Naive thymus-derived CD4-positive, alpha-beta T cell (primary cell): ENCODE measurements at regions of chr7 and their contacts with region 1.

Region 1: DNA sequence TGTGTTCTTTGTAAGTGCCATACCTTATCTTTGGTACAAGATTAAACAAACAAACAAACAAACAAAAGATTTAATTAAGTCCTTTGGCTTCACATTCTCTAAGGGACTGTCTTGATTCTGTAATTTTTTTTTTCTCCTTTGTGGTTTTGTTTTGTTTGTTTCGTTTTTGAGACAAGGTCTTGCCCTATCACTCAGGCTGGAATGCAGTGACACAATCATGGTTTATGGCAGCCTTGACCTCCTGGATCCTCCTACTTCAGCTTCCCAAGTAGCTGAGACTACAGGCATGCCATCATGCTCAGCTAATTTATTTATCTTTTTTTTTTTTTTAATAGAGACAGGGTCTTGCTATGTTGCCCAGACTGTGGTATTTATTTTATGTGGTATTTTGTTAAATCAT is 165.8 kb downstream of the LRRC4 start:
- DNase-seq: no peak
- ATAC-seq: no peak
- H3K4me3 ChIP-seq: no peak overlapping the region
- H3K4me3 Mint-ChIP-seq: no peak overlapping the region
- H3K27ac ChIP-seq: no peak overlapping the region
- H3K27ac Mint-ChIP-seq: no peak overlapping the region
- H3K4me1 ChIP-seq: peaks cover 0 to 7% of the 10 kb centered on the region in 2 donors
- H3K4me1 Mint-ChIP-seq: peaks cover 19 to 43% (median 23%) of the 10 kb centered on the region in 7 donors
- H3K27me3 ChIP-seq: no peaks in the 10 kb centered on the region
- H3K27me3 Mint-ChIP-seq: peaks cover 0 to 1% (median 0%) of the 10 kb centered on the region in 5 donors

Region 2: GRCh38 chr7:127776776-127777386 is 88.6 kb before region 1 on chr7:
- CTCF ChIA-PET with region 1: no interaction called
- POLR2A ChIA-PET with region 1: no interaction called
- intact Hi-C with region 1: no loop called
- DNase-seq: no peak
- ATAC-seq: no peak
- H3K4me3 ChIP-seq: no peak overlapping the region
- H3K4me3 Mint-ChIP-seq: no peak overlapping the region
- H3K27ac ChIP-seq: no peak overlapping the region
- H3K27ac Mint-ChIP-seq: no peak overlapping the region
- H3K4me1 ChIP-seq: no peaks in the 10 kb centered on the region
- H3K4me1 Mint-ChIP-seq: peaks cover 9 to 39% (median 20%) of the 10 kb centered on the region in 7 donors
- H3K27me3 ChIP-seq: no peaks in the 10 kb centered on the region
- H3K27me3 Mint-ChIP-seq: no peaks in the 10 kb centered on the region

Region 3: DNA sequence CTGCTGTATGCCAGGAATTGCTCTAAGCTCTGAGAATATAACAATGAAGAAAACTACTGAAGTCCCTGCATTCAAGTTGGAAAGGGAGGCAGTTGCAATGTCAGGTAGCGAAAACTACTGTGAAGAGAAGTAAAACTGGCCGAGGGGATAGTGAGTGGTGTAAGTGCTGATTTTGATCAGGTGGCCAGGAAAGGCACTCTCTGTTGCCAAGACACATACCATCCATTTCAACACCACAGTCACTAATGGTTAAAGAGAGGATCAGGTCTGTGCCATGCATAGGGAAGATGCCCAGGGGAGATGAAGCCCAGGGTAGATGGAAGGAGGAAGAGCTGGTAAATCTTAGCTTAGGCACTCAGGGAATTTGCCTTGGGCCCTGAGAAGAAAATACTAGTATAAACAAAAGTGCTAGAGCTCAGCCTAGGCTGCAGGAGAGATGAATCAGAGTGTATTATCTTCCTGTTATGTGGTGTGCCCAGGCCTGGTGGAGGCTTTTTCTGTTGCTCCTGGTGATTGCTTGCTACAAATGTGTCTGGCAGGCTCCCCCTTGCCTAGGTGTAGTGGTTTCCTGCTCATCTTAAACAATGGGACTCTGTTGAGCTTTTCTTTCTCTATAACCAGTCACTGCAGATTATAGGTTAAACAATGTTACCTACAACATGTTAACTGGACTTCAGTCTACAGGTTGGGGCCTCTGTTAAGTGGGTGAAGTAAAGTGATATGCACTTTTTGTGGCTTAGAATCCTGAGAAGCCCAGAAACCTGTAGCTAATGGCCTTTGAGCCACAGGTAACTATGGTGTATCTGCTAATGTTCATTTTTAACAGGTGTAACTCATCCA is 40.2 kb after region 1 on chr7:
- CTCF ChIA-PET with region 1: no interaction called
- POLR2A ChIA-PET with region 1: no interaction called
- intact Hi-C with region 1: loop called in 1 of 2 experiments (anchors 5 kb)
- DNase-seq: no peak
- ATAC-seq: no peak
- H3K4me3 ChIP-seq: no peak overlapping the region
- H3K4me3 Mint-ChIP-seq: peak overlapping the region in 1 of 10 donors; percentile 3
- H3K27ac ChIP-seq: no peak overlapping the region
- H3K27ac Mint-ChIP-seq: peak overlapping the region in 1 of 9 donors; percentile 25
- H3K4me1 ChIP-seq: no peaks in the 10 kb centered on the region
- H3K4me1 Mint-ChIP-seq: peaks cover 12 to 51% (median 20%) of the 10 kb centered on the region in 7 donors
- H3K27me3 ChIP-seq: no peaks in the 10 kb centered on the region
- H3K27me3 Mint-ChIP-seq: no peaks in the 10 kb centered on the region

Region 4: GRCh38 chr7:127920787-127921438 is 55.4 kb after region 1 on chr7:
- CTCF ChIA-PET with region 1: no interaction called
- POLR2A ChIA-PET with region 1: no interaction called
- intact Hi-C with region 1: no loop called
- DNase-seq: no peak
- ATAC-seq: no peak
- H3K4me3 ChIP-seq: no peak overlapping the region
- H3K4me3 Mint-ChIP-seq: no peak overlapping the region
- H3K27ac ChIP-seq: no peak overlapping the region
- H3K27ac Mint-ChIP-seq: no peak overlapping the region
- H3K4me1 ChIP-seq: no peaks in the 10 kb centered on the region
- H3K4me1 Mint-ChIP-seq: peaks cover 0 to 20% (median 11%) of the 10 kb centered on the region in 7 donors
- H3K27me3 ChIP-seq: no peaks in the 10 kb centered on the region
- H3K27me3 Mint-ChIP-seq: no peaks in the 10 kb centered on the region

Region 5: DNA sequence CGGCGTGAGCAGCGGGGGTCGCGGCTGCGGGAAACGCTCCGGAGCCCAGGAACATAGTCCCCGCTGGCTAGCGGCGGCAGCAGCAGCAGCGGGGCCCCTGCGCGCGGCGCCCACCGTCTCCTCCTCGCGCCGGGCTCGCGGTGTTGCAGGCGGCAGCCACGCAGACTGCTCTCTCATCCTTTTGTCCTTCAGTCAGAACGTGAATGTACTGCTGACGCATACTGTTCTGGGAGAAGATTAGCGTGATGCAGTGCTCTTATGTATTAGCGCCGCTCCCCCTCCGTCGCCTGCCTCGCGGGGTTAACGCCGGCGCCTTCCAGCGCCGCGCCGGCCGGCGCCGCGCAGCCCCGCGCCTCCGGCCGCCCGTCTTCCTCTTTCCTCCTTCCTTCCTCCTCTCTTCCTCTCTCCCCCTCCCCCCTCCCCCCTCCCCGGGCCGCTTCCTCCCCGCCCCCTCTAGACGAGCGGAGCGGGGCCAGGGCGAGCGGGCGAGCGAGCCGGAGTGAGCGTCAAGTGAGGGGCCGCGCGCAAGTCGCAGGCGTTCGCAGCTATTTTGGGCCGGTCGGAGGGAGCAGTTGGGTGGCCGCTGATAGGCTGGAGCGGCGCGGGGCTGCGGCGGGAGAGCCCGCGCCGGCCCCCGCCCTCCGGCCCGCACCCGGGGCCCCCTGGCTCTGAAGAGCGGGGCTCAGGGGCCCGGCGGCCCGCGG is 166.6 kb after region 1 on chr7:
- CTCF ChIA-PET with region 1: no interaction called
- POLR2A ChIA-PET with region 1: no interaction called
- intact Hi-C with region 1: no loop called
- DNase-seq: peak; percentile 29 to 63 (median 53)
- ATAC-seq: peak; percentile 92
- H3K4me3 ChIP-seq: peak overlapping the region; percentile 61
- H3K4me3 Mint-ChIP-seq: peak overlapping the region; percentile 84 to 97 (median 92)
- H3K27ac ChIP-seq: no peak overlapping the region
- H3K27ac Mint-ChIP-seq: peak overlapping the region in 3 of 9 donors; percentile 74 to 76 (median 74)
- H3K4me1 ChIP-seq: no peaks in the 10 kb centered on the region
- H3K4me1 Mint-ChIP-seq: peaks cover 6 to 36% (median 23%) of the 10 kb centered on the region in 7 donors
- H3K27me3 ChIP-seq: no peaks in the 10 kb centered on the region
- H3K27me3 Mint-ChIP-seq: peaks cover 0 to 34% (median 7%) of the 10 kb centered on the region in 5 donors

Region 6: DNA sequence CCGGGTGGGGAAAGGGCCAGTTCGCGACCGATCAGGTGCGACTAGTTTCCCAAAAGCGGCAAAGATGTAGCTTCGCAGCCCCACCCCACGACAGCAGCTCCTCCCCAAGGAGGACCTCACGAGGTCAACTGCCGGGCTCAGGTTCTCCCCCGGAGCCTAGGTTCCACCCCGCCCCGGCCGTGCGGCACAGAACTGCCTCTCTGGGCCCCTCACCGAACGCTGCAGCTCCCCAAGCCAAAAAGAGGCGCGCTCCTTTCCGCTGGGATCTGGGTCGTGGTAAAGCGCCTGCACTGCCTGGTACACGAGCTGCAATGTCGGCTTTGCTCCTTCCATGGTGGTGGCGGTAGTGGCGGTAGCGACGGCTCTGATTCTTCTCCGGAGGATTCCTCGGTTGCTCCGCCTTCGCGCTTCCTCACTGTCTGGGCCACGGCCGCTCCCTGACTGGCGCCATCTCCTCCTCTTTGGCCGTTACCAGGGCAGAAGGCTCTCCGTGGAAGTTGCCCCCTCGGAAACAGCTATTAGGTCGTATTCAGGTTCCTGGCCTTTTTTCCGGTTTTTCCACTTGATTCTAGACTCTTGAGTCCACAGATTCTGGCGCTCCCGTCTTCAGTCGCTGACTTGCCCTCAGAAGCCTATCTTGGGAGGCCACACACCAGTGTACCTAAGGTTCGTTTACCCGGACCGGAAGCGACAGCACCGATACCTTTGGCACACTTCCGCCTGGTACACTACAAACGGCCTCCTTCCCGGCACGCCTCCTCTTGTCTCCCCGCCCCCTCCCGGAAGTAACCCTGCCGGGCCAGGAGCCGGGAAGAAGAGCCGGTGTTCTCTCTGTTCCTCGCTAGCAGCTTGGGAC is 1189.2 kb after region 1 on chr7 and contains the start of gene TNPO3:
- CTCF ChIA-PET with region 1: no interaction called
- POLR2A ChIA-PET with region 1: no interaction called
- intact Hi-C with region 1: no loop called
- DNase-seq: peak; percentile 76 to 90 (median 85)
- ATAC-seq: peak; percentile 92
- H3K4me3 ChIP-seq: peak within 1 kb of the TSS; percentile 96
- H3K4me3 Mint-ChIP-seq: peak within 1 kb of the TSS; percentile 91 to 99 (median 99)
- H3K27ac ChIP-seq: peak within 1 kb of the TSS; percentile 92
- H3K27ac Mint-ChIP-seq: peak within 1 kb of the TSS; percentile 96 to 100 (median 99)
- H3K4me1 ChIP-seq: peaks cover 15 to 18% of the 10 kb centered on the region in 2 donors
- H3K4me1 Mint-ChIP-seq: peaks cover 17 to 51% (median 39%) of the 10 kb centered on the region in 7 donors
- H3K27me3 ChIP-seq: peaks cover 0 to 3% of the 10 kb centered on the region in 2 donors
- H3K27me3 Mint-ChIP-seq: peaks cover 4 to 13% (median 4%) of the 10 kb centered on the region in 5 donors
- total RNA-seq, gene TNPO3: 28.6 to 40.6 (median 39.6) TPM